Ovary (tissue), 10 donors: ENCODE measurements at regions of chr5 and their contacts with region 1.

Region 1: DNA sequence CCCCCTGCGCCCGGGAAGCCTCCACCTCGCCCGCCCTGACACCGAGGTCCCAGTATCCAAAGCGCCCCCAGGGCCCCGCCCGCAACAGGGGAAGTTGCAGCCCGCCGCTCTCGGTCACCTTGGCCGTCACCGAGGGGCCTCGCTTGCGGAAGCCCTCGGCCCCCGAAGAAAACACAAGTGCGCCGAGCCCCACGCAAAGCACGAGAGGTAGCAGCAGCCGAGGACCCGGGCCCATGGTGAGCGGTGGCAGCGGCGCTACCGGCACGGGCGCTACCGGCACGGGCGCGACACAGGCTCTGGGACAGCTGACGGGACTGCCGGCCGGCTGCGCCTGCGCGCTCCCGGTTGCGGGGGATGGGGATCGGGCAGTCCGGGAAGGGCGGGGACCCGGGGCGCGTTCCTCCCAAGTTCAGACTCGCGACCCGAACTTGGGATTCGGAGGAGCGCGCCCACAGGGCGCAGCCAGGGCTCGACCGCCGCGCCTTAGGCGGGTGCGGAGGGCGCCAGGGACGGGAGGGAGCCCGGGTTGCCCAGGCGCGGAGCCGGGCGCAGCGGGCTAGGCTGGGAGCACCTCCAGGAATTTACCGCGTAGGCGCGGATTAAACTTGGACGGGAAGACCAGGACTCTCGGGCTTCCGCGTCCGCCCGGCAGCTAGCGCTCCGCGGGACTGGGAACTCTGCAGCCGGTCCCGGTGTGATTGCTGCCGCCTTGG is at the start of gene PPIC:
- DNase-seq: peak; percentile 80 to 84 (median 82)
- H3K4me3 ChIP-seq: peak within 1 kb of the TSS; percentile 93
- H3K27ac ChIP-seq: peak within 1 kb of the TSS; percentile 60 to 89
- H3K4me1 ChIP-seq: no peaks in the 10 kb centered on the region
- H3K27me3 ChIP-seq: no peaks in the 10 kb centered on the region
- CTCF ChIP-seq: no peak
- EP300 ChIP-seq: no peak
- POLR2A ChIP-seq: peak; percentile 32
- total RNA-seq, gene PPIC: 9.3 to 22.9 (median 20.2) TPM

Region 2: GRCh38 chr5:122690266-122690665 is 346.3 kb before region 1 on chr5:
- intact Hi-C with region 1: no loop called
- DNase-seq: no peak
- H3K4me3 ChIP-seq: no peak overlapping the region
- H3K27ac ChIP-seq: no peak overlapping the region
- H3K4me1 ChIP-seq: no peaks in the 10 kb centered on the region
- H3K27me3 ChIP-seq: no peaks in the 10 kb centered on the region
- CTCF ChIP-seq: no peak
- EP300 ChIP-seq: no peak
- POLR2A ChIP-seq: no peak

Region 3: DNA sequence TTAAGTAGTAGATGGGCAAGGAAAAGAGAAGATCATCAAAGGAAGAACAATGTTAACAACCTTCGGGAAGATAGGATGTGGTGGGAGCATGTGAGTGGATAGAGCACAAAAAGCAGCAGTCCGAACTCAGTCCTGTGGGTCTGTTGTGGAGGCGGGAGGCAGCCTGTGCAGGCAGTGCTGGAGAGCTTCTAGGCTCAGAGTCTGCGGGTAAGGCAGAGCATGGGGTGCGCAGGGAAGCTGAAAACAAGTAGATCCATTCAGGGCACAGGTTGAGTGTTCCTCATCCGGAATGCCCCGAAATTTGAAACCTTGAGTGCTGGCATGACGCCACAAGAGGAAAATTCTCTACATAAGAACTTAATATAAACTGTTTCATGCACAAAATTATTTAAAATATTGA is 84.9 kb before region 1 on chr5:
- intact Hi-C with region 1: no loop called
- DNase-seq: no peak
- H3K4me3 ChIP-seq: no peak overlapping the region
- H3K27ac ChIP-seq: no peak overlapping the region
- H3K4me1 ChIP-seq: no peaks in the 10 kb centered on the region
- H3K27me3 ChIP-seq: no peaks in the 10 kb centered on the region
- CTCF ChIP-seq: no peak
- EP300 ChIP-seq: no peak
- POLR2A ChIP-seq: no peak

Region 4: GRCh38 chr5:123089914-123090670 is 53.5 kb after region 1 on chr5:
- intact Hi-C with region 1: loop called in 1 of 4 experiments (anchors 5 kb)
- DNase-seq: peak in 4 of 5 donors; percentile 21 to 60 (median 55)
- H3K4me3 ChIP-seq: peak overlapping the region; percentile 54
- H3K27ac ChIP-seq: peak overlapping the region; percentile 9 to 84
- H3K4me1 ChIP-seq: peaks cover 4% of the 10 kb centered on the region
- H3K27me3 ChIP-seq: no peaks in the 10 kb centered on the region
- CTCF ChIP-seq: no peak
- EP300 ChIP-seq: no peak
- POLR2A ChIP-seq: no peak

Region 5: GRCh38 chr5:123164054-123164453 is 127.5 kb after region 1 on chr5:
- intact Hi-C with region 1: loop called in 1 of 4 experiments (anchors 10 kb)
- DNase-seq: no peak
- H3K4me3 ChIP-seq: no peak overlapping the region
- H3K27ac ChIP-seq: no peak overlapping the region
- H3K4me1 ChIP-seq: peaks cover 2% of the 10 kb centered on the region
- H3K27me3 ChIP-seq: no peaks in the 10 kb centered on the region
- CTCF ChIP-seq: no peak
- EP300 ChIP-seq: no peak
- POLR2A ChIP-seq: no peak

Region 6: GRCh38 chr5:123344816-123345426 is 308.4 kb after region 1 on chr5:
- intact Hi-C with region 1: loop called in 1 of 4 experiments (anchors 10 kb)
- DNase-seq: peak; percentile 20 to 45 (median 23)
- H3K4me3 ChIP-seq: no peak overlapping the region
- H3K27ac ChIP-seq: no peak overlapping the region
- H3K4me1 ChIP-seq: no peaks in the 10 kb centered on the region
- H3K27me3 ChIP-seq: no peaks in the 10 kb centered on the region
- CTCF ChIP-seq: peak; percentile 37 to 61 (median 52)
- EP300 ChIP-seq: no peak
- POLR2A ChIP-seq: no peak